Thyroid gland (tissue), 4 donors: ENCODE measurements at regions of chr17 and their contacts with region 1.

Region 1: GRCh38 chr17:2244545-2245525 is 58.8 kb downstream of the SMG6 start:
- DNase-seq: peak; percentile 83 to 90
- H3K4me3 ChIP-seq: no peak overlapping the region
- H3K27ac ChIP-seq: peak overlapping the region in 2 of 3 donors; percentile 32 to 52
- H3K4me1 ChIP-seq: peaks cover 0 to 16% of the 10 kb centered on the region in 2 donors
- H3K27me3 ChIP-seq: no peaks in the 10 kb centered on the region
- CTCF ChIP-seq: peak; percentile 95 to 99 (median 96)
- POLR2A ChIP-seq: no peak

Region 2: DNA sequence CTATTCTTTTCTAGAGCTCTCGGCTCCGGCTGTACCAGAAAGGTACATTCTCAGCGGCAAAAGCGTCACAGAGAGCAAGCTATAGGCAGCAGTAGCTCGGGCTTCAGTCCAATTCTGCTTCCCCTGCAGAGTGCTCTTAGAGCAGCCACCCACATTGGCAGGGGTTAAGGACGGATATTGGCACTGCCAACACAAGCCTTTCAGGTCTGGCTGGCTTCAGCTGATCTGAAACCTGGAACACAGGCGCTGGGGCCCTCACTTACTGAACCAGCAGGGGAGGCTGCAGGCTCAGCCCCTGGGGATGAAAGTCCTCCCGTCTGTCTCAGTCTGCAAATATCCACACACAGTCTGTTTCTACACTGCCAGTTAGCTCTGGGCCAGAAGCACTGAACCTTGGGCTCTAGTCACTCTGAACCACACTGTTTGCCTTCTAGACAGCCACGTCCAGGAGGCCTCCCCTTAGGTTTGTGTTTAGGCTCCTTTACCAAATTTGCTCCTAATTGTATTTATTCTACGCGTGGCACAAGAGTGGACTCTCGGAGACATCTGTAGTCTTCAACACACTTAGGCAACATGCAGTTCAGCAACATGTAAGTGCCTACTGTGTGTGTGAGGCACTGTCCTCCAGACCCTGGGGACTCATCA is 149.8 kb before region 1 on chr17:
- intact Hi-C with region 1: loop called (anchors 10 kb)
- DNase-seq: peak; percentile 92 to 93
- H3K4me3 ChIP-seq: no peak overlapping the region
- H3K27ac ChIP-seq: peak overlapping the region; percentile 67 to 74 (median 73)
- H3K4me1 ChIP-seq: peaks cover 30 to 48% of the 10 kb centered on the region in 2 donors
- H3K27me3 ChIP-seq: no peaks in the 10 kb centered on the region
- CTCF ChIP-seq: peak; percentile 71 to 99 (median 96)
- POLR2A ChIP-seq: no peak

Region 3: GRCh38 chr17:2157675-2158395 is 87.0 kb before region 1 on chr17:
- intact Hi-C with region 1: loop called (anchors 5 kb)
- DNase-seq: no peak
- H3K4me3 ChIP-seq: no peak overlapping the region
- H3K27ac ChIP-seq: peak overlapping the region in 1 of 3 donors; percentile 14
- H3K4me1 ChIP-seq: peaks cover 6 to 15% of the 10 kb centered on the region in 2 donors
- H3K27me3 ChIP-seq: no peaks in the 10 kb centered on the region
- CTCF ChIP-seq: no peak
- POLR2A ChIP-seq: no peak